Right ventricle myocardium inferior (tissue), 1 donor: ENCODE measurements at regions of chr6 and their contacts with region 1.

Region 1: GRCh38 chr6:6661684-6662083 is 73.2 kb downstream of the LY86 start:
- DNase-seq: no peak
- ATAC-seq: peak; percentile 33

Region 2: DNA sequence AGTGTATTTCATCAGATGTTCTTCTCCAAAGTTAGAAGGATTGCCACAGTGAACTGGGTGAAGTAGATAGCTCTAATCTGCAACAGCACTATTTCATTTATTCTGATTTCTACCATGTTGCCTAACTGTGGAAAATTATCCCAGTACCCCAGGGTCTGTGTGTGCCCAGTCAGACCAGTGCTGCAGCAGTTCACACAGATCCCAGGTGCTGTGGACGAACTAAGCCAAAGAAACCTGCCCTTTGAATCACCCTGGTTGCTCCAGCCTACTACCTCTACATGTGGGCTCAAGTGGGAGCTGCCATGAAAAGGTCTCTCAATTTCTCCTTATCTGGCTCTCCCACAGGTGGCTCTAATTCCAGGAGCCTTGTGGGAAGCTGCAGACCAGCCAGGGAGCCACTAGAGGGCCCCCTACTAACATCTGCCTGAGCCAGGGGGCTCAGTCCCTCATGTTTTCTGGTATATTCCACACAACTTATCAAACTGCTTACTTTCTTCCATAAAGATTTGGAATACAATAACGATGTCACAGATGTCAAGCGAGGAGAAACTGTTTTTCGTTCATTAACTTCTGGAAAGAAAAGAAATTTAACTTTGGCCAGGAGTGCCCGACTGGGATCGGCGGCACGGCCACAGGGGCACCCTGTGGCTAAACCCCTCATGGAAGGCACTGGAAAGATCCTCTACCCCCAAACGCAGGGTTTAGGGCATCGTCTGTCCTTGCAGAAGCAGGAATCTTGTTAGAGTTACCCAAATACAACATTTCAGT is 104.8 kb before region 1 on chr6:
- intact Hi-C with region 1: loop called (anchors 5 kb)
- DNase-seq: no peak
- ATAC-seq: peak; percentile 74

Region 3: DNA sequence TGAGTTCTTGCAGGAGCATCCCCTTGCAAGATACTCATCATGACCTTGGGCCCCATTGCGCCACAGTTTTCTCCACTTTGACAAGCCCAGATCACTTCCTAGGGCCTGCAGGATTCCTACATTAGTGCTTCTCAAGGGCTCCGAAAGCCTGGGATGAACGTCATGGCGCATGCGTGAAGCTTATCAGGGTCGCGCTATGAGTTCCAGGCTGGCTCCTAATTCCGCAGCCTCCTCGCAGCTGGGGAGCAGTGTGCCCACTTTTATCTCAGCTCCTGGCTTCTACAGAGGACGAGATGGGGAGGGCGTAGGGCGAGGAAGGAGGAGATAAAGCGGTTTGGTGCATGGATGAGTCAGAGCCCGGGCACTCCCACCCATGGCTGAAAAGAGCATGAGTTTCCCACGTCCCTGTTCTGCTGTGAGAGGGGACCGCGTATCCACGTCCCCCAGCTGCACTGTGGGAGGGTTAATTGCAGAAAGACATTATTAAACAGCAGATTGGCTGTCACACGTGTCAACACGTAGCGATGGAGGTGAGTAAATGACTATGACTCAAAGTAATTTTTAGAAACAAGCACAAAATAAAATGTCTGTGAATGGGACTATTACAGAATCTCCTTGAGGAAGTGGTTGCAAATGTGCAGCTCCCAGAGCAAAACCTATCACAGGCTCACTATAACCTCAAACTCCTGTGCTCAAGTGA is 806.8 kb after region 1 on chr6:
- intact Hi-C with region 1: no loop called
- DNase-seq: no peak
- ATAC-seq: peak; percentile 86